GM13976 (cell line): ENCODE measurements at regions of chr6 and their contacts with region 1.

Region 1: DNA sequence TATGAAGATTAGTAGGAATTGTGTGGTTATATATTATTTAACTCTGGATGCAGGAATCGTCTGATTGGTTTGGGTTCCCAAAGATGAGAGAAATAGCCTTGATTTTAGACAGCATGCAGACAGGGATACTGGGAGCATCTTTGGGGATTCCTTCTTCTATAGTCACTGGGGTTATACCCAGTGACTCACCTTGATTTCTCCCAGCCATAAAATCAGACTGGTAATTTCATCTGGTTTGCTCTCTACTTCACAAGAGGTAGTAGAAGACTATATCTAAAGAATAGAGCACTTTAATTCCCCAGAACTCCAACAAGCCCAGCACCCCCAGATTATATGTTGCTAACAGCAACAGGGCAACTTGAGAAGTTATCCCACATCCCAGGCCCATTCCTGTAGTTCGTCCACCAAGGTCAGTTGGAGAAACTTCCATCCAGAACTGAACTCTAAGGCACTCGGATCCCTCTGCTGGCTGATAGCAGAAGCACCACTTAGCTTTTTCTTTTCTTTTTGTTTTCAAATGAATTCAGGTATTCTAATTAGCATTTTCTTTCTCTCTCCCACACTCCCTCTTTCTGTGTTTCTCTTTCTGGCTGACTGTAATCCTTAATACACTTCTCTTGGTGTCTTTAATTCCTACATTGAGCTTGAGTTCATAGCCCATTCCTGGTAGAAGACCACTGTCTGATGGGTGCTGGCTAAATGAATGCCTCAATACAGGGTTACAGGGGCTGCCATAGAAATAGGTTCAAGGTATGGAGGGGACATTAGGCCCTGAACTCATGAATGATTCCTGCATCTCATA is 20.4 kb upstream of the EFHC1 start:
- DNase-seq: peak; percentile 48
- CTCF ChIP-seq: peak; percentile 78

Region 2: GRCh38 chr6:52293067-52293466 is 106.6 kb before region 1 on chr6:
- in situ Hi-C with region 1: loop called (anchors 5 kb)
- DNase-seq: no peak
- CTCF ChIP-seq: no peak